Activated T-helper 2 cell treated with anti-CD3 and anti-CD28 coated beads, Interferon-gamma antibody, Interleukin-2, Interleukin-4, amounts not matched to agents 10 μg/mL and 5 μg/mL and 100 μg/mL, durations not matched to agents 14 hours and 24 hours and 36 hours (primary cell): ENCODE measurements at regions of chr4 and their contacts with region 1.

Region 1: GRCh38 chr4:154743683-154744340 is at the start of gene LRAT:
- DNase-seq: peak; percentile 46
- H3K4me3 Mint-ChIP-seq: peak within 1 kb of the TSS; percentile 82
- H3K27ac Mint-ChIP-seq: no peak within 1 kb of the TSS
- H3K4me1 Mint-ChIP-seq: peaks cover 20% of the 10 kb centered on the region
- H3K27me3 Mint-ChIP-seq: peaks cover 70% of the 10 kb centered on the region
- total RNA-seq, gene LRAT: 0.07 TPM in 1 of 2 replicates, not detected in the other

Region 2: DNA sequence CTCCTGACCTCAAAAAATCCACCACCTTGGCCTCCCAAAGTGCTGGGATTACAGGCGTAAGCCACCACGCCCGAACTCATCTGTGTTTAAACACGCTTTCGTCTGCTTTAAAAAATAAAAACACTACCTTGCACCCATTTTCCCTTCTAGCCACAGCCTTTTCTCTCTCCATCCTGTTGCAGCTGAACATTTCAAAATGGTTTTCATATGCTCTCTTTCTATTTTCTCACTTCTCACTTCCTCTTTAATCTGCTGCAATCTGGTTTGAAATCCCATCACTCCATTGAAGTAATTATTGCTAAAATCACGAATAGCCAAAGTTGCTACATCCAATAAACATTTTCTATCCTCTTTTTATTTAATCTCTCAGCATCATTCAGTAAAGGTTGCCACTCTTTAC is 322.2 kb before region 1 on chr4:
- intact Hi-C with region 1: no loop called
- DNase-seq: no peak
- H3K4me3 Mint-ChIP-seq: no peak overlapping the region
- H3K27ac Mint-ChIP-seq: no peak overlapping the region
- H3K4me1 Mint-ChIP-seq: peaks cover 4% of the 10 kb centered on the region
- H3K27me3 Mint-ChIP-seq: peaks cover 33% of the 10 kb centered on the region

Region 3: DNA sequence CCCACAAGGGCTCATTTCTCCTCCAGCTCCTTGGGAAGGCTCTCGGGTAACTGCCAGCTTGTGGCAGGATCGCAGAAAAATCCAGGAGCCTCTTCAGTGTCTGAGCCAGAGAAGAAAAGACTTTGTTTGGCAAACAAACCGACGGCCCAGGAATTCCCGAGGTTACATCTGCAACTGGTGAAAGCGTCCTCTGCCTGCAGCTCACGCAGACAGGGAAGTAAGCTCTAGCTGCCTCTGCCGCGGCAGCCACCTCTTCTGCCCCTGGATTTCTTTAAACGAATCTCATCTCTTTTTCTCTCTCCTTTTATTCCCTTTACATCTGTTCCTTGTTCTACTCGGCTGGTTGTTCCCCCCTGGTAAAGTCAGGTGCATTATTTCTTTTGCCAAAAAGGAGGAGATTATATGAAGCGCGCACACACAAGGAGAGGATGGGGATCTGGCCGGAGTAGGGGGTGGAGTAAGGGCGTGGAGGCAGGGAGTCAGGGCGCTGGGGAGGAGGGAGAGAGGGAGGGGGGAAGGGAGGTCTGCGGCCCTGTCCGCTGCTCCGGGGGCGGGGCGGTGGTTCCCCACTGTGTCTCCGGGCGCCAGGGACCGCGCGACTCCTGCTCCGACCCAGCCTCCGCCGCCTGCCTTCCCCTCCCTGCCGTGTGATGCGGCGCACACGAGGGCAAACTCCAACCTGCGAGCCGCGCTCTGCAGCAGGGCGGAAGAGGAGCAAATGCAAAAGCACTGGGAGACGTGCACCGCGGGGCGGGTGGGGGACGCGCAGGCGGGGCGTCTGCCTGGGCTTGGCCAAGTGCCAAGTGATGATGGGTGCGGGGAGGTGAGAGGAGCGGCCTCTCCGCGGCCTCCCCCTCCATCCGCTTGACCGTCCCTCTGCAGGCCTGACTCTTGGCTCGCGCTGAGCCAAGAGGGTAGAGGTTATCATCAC is 252.2 kb before region 1 on chr4 and contains the start of gene DCHS2:
- intact Hi-C with region 1: loop called (anchors 2 kb)
- DNase-seq: no peak
- H3K4me3 Mint-ChIP-seq: peak within 1 kb of the TSS; percentile 55
- H3K27ac Mint-ChIP-seq: no peak within 1 kb of the TSS
- H3K4me1 Mint-ChIP-seq: peaks cover 12% of the 10 kb centered on the region
- H3K27me3 Mint-ChIP-seq: peaks cover 63% of the 10 kb centered on the region
- total RNA-seq, gene DCHS2: not detected in 2 replicates

Region 4: GRCh38 chr4:154822775-154823174 is 79.0 kb after region 1 on chr4:
- intact Hi-C with region 1: no loop called
- DNase-seq: no peak
- H3K4me3 Mint-ChIP-seq: no peak overlapping the region
- H3K27ac Mint-ChIP-seq: no peak overlapping the region
- H3K4me1 Mint-ChIP-seq: peaks cover 3% of the 10 kb centered on the region
- H3K27me3 Mint-ChIP-seq: peaks cover 6% of the 10 kb centered on the region